ENCODE measurements at regions of chr11 and their contacts with region 1.

Region 1: GRCh38 chr11:2208691-2209369 is 37.2 kb upstream of the TH start:
- DNase-seq: peak; percentile 41 to 90 (median 70)
- ATAC-seq: peak; percentile 53 to 70 (median 61)
- H3K4me3 ChIP-seq: no peak overlapping the region
- H3K27ac ChIP-seq: peak overlapping the region in 2 of 4 donors; percentile 5 to 17
- H3K4me1 ChIP-seq: peaks cover 0 to 12% (median 10%) of the 10 kb centered on the region in 3 donors
- H3K27me3 ChIP-seq: no peaks in the 10 kb centered on the region
- CTCF ChIP-seq: peak in 2 of 4 donors; percentile 8 to 28

Region 2: DNA sequence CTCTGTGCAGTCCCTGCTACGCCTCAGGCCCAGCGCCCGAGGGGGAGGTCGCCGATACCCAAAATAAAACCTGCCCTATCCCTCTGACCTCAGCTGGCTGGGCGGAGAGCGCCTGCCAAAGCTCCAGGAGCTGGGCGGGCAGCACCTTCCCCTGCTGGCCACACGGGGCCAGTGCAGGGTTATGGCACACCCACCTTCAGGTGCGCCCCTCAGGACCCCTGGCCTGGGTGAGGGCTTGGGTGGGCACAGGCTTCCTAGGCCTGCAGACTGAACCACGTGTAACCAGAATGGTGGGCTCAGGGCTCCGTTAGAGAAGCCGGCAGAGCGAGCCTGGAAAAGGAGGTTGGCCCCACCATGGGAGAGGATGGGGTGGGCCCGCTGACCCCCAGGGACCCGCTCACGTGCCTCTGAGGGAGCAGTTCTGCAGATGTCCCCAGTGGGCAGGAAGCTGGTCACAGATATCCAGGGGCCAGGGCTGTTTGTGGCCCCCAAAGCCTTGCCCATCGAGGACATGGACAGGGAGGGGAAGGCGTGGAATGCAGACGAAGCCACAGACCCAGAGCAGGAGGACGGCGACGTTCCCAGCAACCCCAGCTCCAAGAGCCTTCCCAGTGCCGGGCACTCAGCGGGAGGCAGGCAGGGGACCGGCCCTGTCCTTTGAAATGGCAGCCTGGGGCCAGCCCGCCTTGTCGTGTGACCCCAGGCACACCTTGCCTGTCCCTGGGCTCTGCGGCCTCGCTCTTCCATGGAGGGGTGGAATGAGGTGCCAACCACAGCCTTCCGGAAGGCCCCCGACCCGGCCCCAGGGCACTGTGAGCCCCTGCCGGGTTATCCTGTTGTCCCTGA is 290.9 kb before region 1 on chr11:
- intact Hi-C with region 1: no loop called
- DNase-seq: peak in 3 of 6 donors; percentile 20 to 72 (median 71)
- ATAC-seq: peak in 3 of 4 donors; percentile 41 to 72 (median 70)
- H3K4me3 ChIP-seq: no peak overlapping the region
- H3K27ac ChIP-seq: no peak overlapping the region
- H3K4me1 ChIP-seq: no peaks in the 10 kb centered on the region
- H3K27me3 ChIP-seq: no peaks in the 10 kb centered on the region
- CTCF ChIP-seq: peak in 3 of 4 donors; percentile 25 to 61 (median 45)

Region 3: GRCh38 chr11:2234963-2235362 is 26.1 kb after region 1 on chr11:
- intact Hi-C with region 1: no loop called
- DNase-seq: no peak
- ATAC-seq: no peak
- H3K4me3 ChIP-seq: no peak overlapping the region
- H3K27ac ChIP-seq: no peak overlapping the region
- H3K4me1 ChIP-seq: no peaks in the 10 kb centered on the region
- H3K27me3 ChIP-seq: no peaks in the 10 kb centered on the region
- CTCF ChIP-seq: no peak

Region 4: GRCh38 chr11:2280208-2280607 is 71.4 kb after region 1 on chr11:
- intact Hi-C with region 1: loop called in 1 of 3 experiments (anchors 5 kb)
- DNase-seq: no peak
- ATAC-seq: no peak
- H3K4me3 ChIP-seq: no peak overlapping the region
- H3K27ac ChIP-seq: no peak overlapping the region
- H3K4me1 ChIP-seq: no peaks in the 10 kb centered on the region
- H3K27me3 ChIP-seq: no peaks in the 10 kb centered on the region
- CTCF ChIP-seq: no peak

Measured in pancreas (tissue), 10 donors.